ENCODE measurements at regions of chr2 and their contacts with region 1.

Region 1: DNA sequence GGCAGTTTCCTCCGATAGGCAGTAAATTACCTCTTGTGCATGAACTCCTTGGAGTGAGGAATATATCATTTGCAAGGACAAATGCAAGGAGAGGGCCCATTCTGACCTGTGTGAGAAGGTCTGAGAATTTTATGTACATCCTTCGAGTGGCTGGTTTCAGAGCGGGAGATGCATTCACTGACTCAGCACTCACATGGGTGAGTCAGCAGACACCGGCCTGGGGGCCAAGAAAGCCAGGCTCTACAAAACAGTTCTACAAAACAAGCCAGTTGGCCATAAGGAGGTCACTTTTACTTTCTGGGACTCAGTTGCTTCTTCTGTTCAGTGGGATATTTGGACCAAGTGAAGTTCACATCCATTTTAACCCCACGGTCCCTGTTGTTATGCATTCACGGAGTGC is 35.3 kb downstream of the CYP26B1 start:
- DNase-seq: no peak
- ATAC-seq: no peak
- H3K4me3 ChIP-seq: no peak overlapping the region
- H3K27ac ChIP-seq: no peak overlapping the region
- H3K4me1 ChIP-seq: no peaks in the 10 kb centered on the region
- H3K27me3 ChIP-seq: peaks cover 9 to 70% of the 10 kb centered on the region in 2 experiments; a peak in 4 of 5 replicates
- CTCF ChIP-seq: no peak
- EP300 ChIP-seq: no peak
- POLR2A ChIP-seq: no peak
- RAD21 ChIP-seq: no peak

Region 2: DNA sequence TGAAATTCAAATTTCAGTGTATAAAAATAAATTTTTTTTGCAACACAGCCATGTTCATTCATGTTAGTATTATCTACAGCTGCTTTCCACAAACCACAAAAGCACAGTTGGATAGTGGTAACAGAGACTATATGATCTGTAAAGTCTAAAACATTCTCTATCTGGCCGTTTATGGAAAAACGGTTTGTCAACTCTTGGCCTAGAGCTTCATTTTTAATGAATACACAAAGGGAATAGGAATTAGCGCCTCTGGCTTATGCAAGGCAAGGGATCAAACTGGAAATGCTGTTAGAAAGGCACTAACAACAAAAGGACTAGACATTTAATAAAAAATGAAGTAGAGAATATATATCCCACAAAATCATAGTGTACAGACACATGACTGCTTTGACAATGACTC is 501.5 kb after region 1 on chr2:
- CTCF ChIA-PET with region 1: no interaction called
- POLR2A ChIA-PET with region 1: no interaction called
- in situ Hi-C with region 1: no loop called
- intact Hi-C with region 1: no loop called
- DNase-seq: no peak
- ATAC-seq: no peak
- H3K4me3 ChIP-seq: no peak overlapping the region
- H3K27ac ChIP-seq: no peak overlapping the region
- H3K4me1 ChIP-seq: no peaks in the 10 kb centered on the region
- H3K27me3 ChIP-seq: no peaks in the 10 kb centered on the region
- CTCF ChIP-seq: no peak
- EP300 ChIP-seq: no peak
- POLR2A ChIP-seq: no peak
- RAD21 ChIP-seq: no peak

Region 3: DNA sequence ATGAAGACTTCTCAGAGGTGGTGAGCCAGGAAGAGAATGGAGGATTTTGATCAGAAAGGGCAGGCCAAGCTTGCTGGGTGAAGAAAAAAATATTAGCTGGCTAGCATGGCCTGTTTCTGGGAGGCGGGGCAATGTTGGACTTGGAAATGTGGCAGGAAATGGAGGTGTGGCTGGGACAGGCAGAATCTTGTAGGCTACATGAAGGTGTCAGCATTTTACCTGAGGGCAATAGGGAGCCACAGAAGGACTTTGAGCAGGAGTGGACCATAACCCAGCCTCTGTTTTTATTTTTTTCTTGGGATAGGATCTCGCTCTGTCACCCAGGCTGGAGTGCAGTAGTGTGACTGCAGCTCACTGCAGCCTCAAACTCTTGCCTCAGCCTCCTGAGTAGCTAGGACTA is 836.6 kb after region 1 on chr2:
- CTCF ChIA-PET with region 1: no interaction called
- POLR2A ChIA-PET with region 1: no interaction called
- in situ Hi-C with region 1: no loop called
- intact Hi-C with region 1: loop called (anchors 5 kb)
- DNase-seq: no peak
- ATAC-seq: no peak
- H3K4me3 ChIP-seq: no peak overlapping the region
- H3K27ac ChIP-seq: no peak overlapping the region
- H3K4me1 ChIP-seq: peaks cover 3% of the 10 kb centered on the region
- H3K27me3 ChIP-seq: no peaks in the 10 kb centered on the region
- CTCF ChIP-seq: no peak
- EP300 ChIP-seq: no peak
- POLR2A ChIP-seq: no peak
- RAD21 ChIP-seq: no peak